Brain microvascular endothelial cell (primary cell): ENCODE measurements at regions of chr5 and their contacts with region 1.

Region 1: GRCh38 chr5:95664204-95664786 is 17.7 kb downstream of the RFESD start:
- DNase-seq: no peak
- H3K4me3 ChIP-seq: no peak overlapping the region
- H3K27ac ChIP-seq: no peak overlapping the region
- H3K27me3 ChIP-seq: no peaks in the 10 kb centered on the region
- CTCF ChIP-seq: peak; percentile 68

Region 2: GRCh38 chr5:95846554-95847260 is 182.4 kb after region 1 on chr5:
- in situ Hi-C with region 1: loop called (anchors 25 kb)
- DNase-seq: peak; percentile 70
- H3K4me3 ChIP-seq: no peak overlapping the region
- H3K27ac ChIP-seq: no peak overlapping the region
- H3K27me3 ChIP-seq: no peaks in the 10 kb centered on the region
- CTCF ChIP-seq: peak; percentile 91

Region 3: GRCh38 chr5:95892780-95893354 is 228.6 kb after region 1 on chr5:
- in situ Hi-C with region 1: no loop called
- DNase-seq: peak; percentile 53
- H3K4me3 ChIP-seq: no peak overlapping the region
- H3K27ac ChIP-seq: no peak overlapping the region
- H3K27me3 ChIP-seq: no peaks in the 10 kb centered on the region
- CTCF ChIP-seq: peak; percentile 77